Tibial artery (tissue), 4 donors: ENCODE measurements at regions of chr9 and their contacts with region 1.

Region 1: DNA sequence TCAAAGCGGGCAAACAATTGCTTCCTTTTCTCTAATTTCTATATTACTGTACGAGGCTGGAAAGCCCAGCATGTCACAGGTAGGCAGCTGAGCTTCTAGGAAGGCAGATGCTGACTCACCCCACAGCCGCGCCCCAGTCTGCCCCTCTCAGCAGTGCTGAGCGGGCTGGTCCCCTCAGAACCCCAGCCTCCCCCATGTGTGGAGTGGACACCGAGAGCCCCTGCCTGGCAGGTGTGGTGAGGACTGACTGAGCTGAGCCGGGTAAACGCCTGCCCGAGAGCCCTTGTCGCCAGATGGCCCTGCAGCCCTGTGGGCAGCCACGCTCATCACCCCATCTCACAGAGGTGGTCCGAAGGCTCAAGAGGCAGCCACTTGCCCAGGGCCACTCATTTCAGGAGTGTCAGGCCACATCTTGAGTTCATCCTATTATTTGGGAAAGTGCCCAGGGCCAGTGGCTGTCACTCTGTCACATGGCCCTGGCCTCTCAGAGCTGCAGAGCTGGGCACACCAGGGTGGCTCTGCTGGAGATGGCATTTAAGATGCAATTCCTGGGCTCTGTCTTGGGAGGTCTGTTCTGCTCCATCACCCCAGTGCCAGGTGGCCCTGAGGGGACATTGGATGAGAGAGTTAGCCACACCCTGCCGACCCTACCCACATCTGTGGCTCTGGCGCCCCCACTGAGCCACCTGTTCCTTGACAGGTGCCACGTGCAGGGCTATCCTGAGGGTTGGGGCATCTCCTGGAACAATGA is 12.4 kb downstream of the CARD19 start:
- DNase-seq: peak; percentile 20 to 63
- H3K4me3 ChIP-seq: no peak overlapping the region
- H3K27ac ChIP-seq: no peak overlapping the region
- H3K4me1 ChIP-seq: peaks cover 0 to 22% (median 11%) of the 10 kb centered on the region in 4 donors
- H3K27me3 ChIP-seq: no peaks in the 10 kb centered on the region
- CTCF ChIP-seq: no peak

Region 2: GRCh38 chr9:93003552-93004407 is 104.7 kb before region 1 on chr9:
- intact Hi-C with region 1: loop called (anchors 10 kb)
- DNase-seq: no peak
- H3K4me3 ChIP-seq: peak overlapping the region; percentile 36 to 37
- H3K27ac ChIP-seq: no peak overlapping the region
- H3K4me1 ChIP-seq: peaks cover 0 to 9% (median 5%) of the 10 kb centered on the region in 4 donors
- H3K27me3 ChIP-seq: peaks cover 0 to 2% of the 10 kb centered on the region in 2 donors
- CTCF ChIP-seq: peak; percentile 71 to 72